Activated naive CD4-positive, alpha-beta T cell treated with anti-CD3 and anti-CD28 coated beads for 36 hours (primary cell): ENCODE measurements at regions of chr3 and their contacts with region 1.

Region 1: DNA sequence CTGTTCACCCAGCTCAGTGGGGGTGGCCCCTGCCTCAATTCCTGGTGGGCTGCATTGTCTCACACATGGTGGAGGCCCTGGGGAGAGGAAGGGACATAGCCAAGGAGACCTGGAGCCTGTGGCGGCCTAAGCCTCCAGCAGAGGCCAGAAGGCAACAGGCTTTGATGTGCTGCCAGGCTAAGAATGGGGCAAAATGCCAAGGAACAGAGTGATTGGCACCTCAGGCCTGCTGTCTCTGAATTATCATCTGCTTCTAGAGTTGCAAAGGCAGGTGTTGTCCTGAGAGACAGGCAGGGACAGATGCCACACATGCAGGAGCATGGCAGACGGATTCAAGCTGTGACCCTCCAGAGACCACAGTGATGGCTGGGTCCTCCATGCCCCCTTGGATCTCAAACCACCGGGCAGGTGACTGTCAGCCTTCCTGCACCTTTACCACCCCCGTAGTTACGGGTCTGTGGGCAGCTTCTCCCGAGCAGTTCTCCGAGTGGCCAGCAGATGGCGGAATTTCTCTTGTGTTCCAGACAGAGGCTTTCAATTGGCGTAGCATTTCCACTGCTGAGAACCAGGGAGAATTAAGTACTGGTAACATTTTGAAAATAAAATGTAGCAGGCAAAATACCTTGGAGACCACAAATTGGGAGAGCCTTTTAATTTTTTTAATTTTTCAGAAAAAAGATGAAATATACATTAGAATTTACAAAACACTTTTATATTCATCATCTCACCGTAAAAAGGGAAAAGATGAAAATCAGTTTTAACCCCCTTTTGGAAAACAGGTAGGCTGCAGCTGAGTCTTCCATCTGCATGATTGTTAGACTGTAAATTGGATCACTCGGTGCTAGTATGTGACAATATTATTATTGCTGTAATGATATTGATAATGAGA is 525.5 kb upstream of the CFAP20DC start:
- DNase-seq: peak; percentile 94
- H3K4me3 Mint-ChIP-seq: no peak overlapping the region
- H3K27ac Mint-ChIP-seq: no peak overlapping the region
- H3K4me1 Mint-ChIP-seq: peaks cover 5% of the 10 kb centered on the region
- H3K27me3 Mint-ChIP-seq: no peaks in the 10 kb centered on the region

Region 2: GRCh38 chr3:59212128-59212779 is 363.1 kb before region 1 on chr3:
- CTCF ChIA-PET with region 1: interaction called, 8 read pairs
- intact Hi-C with region 1: loop called (anchors 1 kb)
- DNase-seq: no peak
- H3K4me3 Mint-ChIP-seq: no peak overlapping the region
- H3K27ac Mint-ChIP-seq: no peak overlapping the region
- H3K4me1 Mint-ChIP-seq: peaks cover 2% of the 10 kb centered on the region
- H3K27me3 Mint-ChIP-seq: no peaks in the 10 kb centered on the region

Region 3: DNA sequence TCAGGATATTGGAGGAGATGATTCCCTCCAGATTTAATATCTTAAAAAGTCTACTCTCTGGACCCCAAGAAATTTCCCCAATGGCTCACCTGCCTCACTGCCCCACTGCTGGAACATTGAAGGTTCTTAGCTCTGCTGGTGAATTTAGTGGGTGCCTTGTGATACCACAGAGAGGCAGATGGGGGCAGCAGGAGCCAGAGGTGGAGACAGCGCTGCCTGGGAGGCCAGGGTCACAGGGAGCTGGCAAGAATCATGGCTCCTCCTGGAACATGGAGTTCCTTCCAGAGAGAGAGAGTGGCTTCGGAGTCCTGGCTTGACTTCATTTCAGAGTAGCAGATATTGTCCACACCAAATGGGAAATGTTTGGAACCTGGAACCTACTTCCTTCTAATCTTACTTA is 262.0 kb before region 1 on chr3:
- CTCF ChIA-PET with region 1: interaction called, 8 read pairs
- intact Hi-C with region 1: loop called (anchors 1 kb)
- DNase-seq: peak; percentile 74
- H3K4me3 Mint-ChIP-seq: no peak overlapping the region
- H3K27ac Mint-ChIP-seq: no peak overlapping the region
- H3K4me1 Mint-ChIP-seq: peaks cover 22% of the 10 kb centered on the region
- H3K27me3 Mint-ChIP-seq: no peaks in the 10 kb centered on the region

Region 4: DNA sequence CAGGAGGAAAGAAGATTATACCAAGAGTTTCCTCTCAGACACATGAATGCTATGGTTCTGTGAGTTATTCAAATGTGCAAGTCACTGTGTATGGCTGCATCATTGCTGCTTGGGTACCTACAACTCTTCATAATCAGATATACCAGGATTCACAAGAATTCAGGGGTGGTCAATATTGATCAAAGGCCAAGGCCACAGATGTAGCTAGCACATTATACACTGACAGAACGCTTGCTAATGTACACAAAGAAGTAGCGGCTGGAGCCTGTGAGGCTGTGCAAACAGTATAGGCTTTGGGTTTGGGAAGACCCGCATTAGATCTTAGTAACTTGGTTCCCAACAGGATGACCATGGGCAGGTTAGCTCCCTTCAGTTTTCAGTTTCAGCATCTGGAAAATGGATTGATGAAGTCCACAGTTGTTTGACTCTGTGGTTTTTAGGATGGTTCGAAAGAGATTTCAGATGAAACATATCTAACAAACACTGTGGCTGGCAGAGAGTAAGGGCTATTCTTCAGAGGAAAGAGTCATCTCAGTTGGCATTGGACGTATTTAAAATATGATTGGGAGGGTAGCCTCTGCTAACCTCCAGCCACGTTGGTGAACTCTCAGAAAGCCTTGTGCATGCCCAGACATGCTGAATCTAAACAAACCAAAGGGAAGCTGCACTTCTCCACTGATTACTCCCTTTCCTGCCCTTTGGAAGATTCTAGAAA is 223.2 kb after region 1 on chr3:
- CTCF ChIA-PET with region 1: no interaction called
- intact Hi-C with region 1: no loop called
- DNase-seq: no peak
- H3K4me3 Mint-ChIP-seq: no peak overlapping the region
- H3K27ac Mint-ChIP-seq: peak overlapping the region; percentile 56
- H3K4me1 Mint-ChIP-seq: peaks cover 39% of the 10 kb centered on the region
- H3K27me3 Mint-ChIP-seq: no peaks in the 10 kb centered on the region

Region 5: GRCh38 chr3:59809710-59810444 is 234.5 kb after region 1 on chr3:
- CTCF ChIA-PET with region 1: interaction called, 25 read pairs
- intact Hi-C with region 1: loop called (anchors 1 kb)
- DNase-seq: no peak
- H3K4me3 Mint-ChIP-seq: no peak overlapping the region
- H3K27ac Mint-ChIP-seq: no peak overlapping the region
- H3K4me1 Mint-ChIP-seq: peaks cover 25% of the 10 kb centered on the region
- H3K27me3 Mint-ChIP-seq: no peaks in the 10 kb centered on the region

Region 6: DNA sequence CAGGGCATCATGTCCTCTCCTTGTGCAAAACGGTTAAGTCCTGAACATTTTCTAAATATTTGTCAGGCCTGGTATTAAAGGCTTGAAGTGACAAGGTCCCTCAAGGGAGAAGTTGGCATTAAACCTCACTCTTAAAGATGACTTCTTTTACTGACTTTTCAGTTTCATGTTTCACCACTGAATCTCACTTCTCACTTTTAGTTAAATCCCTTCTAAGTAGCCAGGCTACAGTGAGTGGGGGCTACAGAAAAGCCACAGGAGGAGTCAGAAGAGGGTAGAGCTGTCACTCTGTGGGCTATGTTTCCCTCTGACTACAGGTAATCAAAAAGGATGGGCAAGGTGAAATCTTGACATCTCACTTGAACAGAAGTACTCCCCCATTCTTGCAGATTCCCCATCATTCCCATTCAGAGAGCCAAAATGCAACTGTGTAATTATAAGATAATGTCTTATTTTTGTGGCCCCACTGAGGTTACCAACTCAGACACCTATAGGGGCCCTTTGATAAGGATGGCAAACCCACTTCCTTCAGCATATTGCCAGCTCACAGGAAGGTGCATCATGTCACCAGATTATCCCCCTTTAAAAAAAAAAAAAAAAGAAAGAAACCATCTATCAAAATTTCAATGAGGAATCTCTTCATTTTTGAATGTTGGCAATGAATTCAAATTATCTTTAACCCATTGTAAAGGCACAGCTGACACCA is 264.6 kb after region 1 on chr3:
- CTCF ChIA-PET with region 1: no interaction called
- intact Hi-C with region 1: no loop called
- DNase-seq: peak; percentile 47
- H3K4me3 Mint-ChIP-seq: no peak overlapping the region
- H3K27ac Mint-ChIP-seq: no peak overlapping the region
- H3K4me1 Mint-ChIP-seq: peaks cover 43% of the 10 kb centered on the region
- H3K27me3 Mint-ChIP-seq: no peaks in the 10 kb centered on the region

Region 7: DNA sequence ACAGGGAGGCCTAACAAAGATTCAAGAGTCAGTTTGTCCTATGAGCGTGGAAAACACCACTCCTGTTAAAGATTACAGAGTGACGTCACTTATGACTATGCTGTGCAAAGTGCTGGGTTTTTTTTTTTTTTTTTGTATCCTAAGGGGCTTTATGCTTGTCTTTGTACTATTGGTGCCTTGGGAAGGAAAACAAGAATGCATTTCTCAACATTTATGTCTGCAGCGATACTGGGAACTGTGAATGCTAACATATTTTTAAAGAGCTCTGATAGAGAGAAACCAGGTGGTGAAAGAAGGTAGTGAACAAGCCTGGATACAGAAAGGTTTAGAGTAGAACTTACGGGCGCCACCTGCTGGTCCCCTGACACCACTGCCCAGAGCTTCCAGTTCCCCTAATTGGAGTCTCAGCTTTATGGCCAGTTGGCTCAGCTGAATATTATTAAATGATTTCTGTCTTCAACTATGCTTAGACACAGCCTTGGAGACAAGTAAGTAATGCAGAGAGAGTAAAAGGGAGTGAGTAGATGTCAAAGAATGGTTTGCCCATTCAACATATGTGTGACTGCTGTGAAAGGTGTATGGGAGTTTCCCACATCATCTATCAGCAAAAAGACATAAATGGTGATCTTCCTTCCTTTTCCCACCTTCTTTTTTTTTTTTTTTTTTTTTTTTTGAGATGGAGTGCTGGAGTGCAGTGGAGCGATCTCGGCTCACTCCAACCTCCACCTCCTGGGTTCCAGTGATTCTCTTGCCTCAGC is 282.4 kb after region 1 on chr3:
- CTCF ChIA-PET with region 1: interaction called, 29 read pairs
- intact Hi-C with region 1: loop called (anchors 1 kb)
- DNase-seq: peak; percentile 90
- H3K4me3 Mint-ChIP-seq: no peak overlapping the region
- H3K27ac Mint-ChIP-seq: peak overlapping the region; percentile 6
- H3K4me1 Mint-ChIP-seq: peaks cover 35% of the 10 kb centered on the region
- H3K27me3 Mint-ChIP-seq: no peaks in the 10 kb centered on the region

Region 8: DNA sequence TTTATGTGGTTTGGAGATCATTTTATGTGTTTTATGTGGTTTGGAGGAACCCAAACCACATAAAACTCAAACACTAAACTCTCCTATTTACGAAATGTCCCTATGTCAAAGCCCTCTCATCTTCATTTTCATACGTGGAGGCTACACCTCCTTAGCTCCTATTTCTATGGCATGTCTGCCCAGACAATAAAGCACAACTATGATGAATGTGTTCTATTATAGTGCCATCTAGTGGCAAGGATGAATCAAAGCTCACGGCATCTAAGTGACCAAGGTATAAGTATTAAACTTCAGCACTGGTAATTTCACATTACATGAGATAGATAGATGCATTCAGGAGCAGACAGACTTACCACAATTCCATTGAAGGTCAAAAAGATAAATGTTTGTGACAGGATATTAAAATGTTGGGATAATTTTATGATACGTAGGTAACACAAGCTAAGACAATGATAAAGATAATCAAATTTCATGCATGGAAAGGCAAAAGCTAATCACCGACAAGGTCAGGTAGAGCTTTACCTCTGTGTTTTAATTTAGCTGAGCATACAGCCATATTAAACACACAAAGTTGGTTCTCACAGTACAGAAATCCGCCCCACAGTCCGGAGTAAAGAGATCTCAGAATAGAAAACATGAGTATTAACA is 1806.5 kb after region 1 on chr3:
- CTCF ChIA-PET with region 1: interaction called, 4 read pairs
- intact Hi-C with region 1: loop called (anchors 2 kb)
- DNase-seq: no peak
- H3K4me3 Mint-ChIP-seq: no peak overlapping the region
- H3K27ac Mint-ChIP-seq: no peak overlapping the region
- H3K4me1 Mint-ChIP-seq: peaks cover 2% of the 10 kb centered on the region
- H3K27me3 Mint-ChIP-seq: peaks cover 18% of the 10 kb centered on the region